ENCODE measurements at regions of chr16 and their contacts with region 1.

Region 1: DNA sequence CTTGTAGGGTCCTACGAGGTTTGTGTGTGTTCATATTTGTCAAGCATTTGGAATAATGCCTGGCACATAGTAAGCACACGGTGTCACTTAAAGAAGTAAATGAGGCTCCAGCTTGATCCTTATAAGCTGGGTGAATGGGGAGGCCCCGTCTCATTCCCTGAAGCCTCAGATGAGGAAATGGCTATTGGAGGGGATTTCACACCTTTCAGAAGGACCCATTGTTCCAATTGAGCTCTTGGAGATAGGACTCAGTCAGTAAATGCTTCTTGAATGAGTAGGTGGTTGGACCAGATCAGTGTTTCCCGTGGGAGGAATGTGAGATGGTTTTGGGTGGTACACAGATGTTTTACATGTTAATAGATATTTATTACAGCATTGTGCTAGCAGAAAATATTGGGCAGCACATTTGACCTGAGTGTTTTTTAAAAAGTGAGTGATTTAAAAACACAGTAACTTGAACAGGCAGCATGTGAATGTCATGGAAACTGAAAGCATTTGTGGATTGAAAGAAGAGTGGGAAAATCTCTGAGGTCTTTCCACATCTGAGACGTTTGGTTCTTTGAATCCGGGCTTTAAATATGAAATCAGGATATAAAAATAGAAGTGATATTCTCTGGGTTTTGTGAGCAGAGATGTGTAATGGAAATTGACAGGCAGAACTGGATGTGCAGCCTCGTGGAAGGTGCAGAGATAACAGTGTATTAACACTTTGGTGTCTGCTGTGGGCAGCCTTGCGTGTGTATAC is 36.4 kb upstream of the ARHGAP17 start:
- DNase-seq: no peak
- ATAC-seq: no peak
- H3K4me3 ChIP-seq: no peak overlapping the region
- H3K27ac ChIP-seq: no peak overlapping the region
- H3K4me1 ChIP-seq: peaks cover 25 to 47% of the 10 kb centered on the region in 2 experiments
- H3K27me3 ChIP-seq: no peaks in the 10 kb centered on the region
- CTCF ChIP-seq: no peak
- POLR2A ChIP-seq: no peak
- RAD21 ChIP-seq: no peak

Region 2: DNA sequence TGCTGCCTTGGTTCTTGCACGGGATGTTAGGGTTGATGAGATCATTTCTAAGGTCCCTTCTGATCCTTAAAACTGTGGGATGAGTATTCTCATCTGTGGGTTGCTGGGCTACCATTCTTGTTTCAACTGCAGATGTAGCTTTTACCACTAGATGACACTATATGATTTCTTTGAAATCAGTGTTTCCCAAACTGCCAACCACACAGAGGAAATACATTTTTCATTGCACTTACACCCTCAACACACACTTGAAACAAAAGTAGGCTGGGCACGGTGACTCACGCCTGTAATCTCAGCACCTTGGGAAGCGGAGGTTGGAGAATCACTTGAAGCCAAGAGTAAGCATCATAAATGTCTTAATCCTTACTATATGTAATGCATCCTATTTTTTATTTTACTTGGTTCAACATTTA is 75.2 kb after region 1 on chr16:
- CTCF ChIA-PET with region 1: no interaction called
- POLR2A ChIA-PET with region 1: no interaction called
- RAD21 ChIA-PET with region 1: no interaction called
- intact Hi-C with region 1: loop called (anchors 1 kb)
- DNase-seq: no peak
- ATAC-seq: peak; percentile 87
- H3K4me3 ChIP-seq: no peak overlapping the region
- H3K27ac ChIP-seq: no peak overlapping the region
- H3K4me1 ChIP-seq: peaks cover 8 to 26% of the 10 kb centered on the region in 2 experiments
- H3K27me3 ChIP-seq: no peaks in the 10 kb centered on the region
- CTCF ChIP-seq: peak; percentile 71 to 87 (median 76)
- POLR2A ChIP-seq: no peak
- RAD21 ChIP-seq: peak; percentile 90

Region 3: GRCh38 chr16:25257504-25257955 is 206.0 kb after region 1 on chr16 and contains the start of gene ZKSCAN2:
- CTCF ChIA-PET with region 1: no interaction called
- POLR2A ChIA-PET with region 1: no interaction called
- RAD21 ChIA-PET with region 1: no interaction called
- intact Hi-C with region 1: loop called (anchors 10 kb)
- DNase-seq: peak; percentile 77
- ATAC-seq: peak; percentile 88
- H3K4me3 ChIP-seq: peak within 1 kb of the TSS; percentile 98
- H3K27ac ChIP-seq: peak within 1 kb of the TSS; percentile 99
- H3K4me1 ChIP-seq: peaks cover 11 to 25% of the 10 kb centered on the region in 2 experiments; a peak in 3 of 4 replicates
- H3K27me3 ChIP-seq: no peaks in the 10 kb centered on the region
- CTCF ChIP-seq: no peak
- POLR2A ChIP-seq: no peak
- RAD21 ChIP-seq: no peak
- total RNA-seq, gene ZKSCAN2: 12.3 TPM